K562 (cell line): ENCODE measurements at regions of chr2 and their contacts with region 1.

Region 1: GRCh38 chr2:168490015-168490874 is 34.2 kb downstream of the CERS6 start:
- DNase-seq: peak in 2 of 4 experiments; percentile 67 to 74
- ATAC-seq: peak; percentile 93
- H3K4me3 ChIP-seq: peak overlapping the region; percentile 17
- H3K27ac ChIP-seq: peak overlapping the region; percentile 76
- H3K4me1 ChIP-seq: peaks cover 0 to 17% of the 10 kb centered on the region in 2 experiments; a peak in 3 of 5 replicates
- H3K27me3 ChIP-seq: no peaks in the 10 kb centered on the region
- CTCF ChIP-seq: no peak
- EP300 ChIP-seq: peak; percentile 32; the same call in 1 of the 2 replicates
- POLR2A ChIP-seq: peak; percentile 48; the same call in 1 of the 2 replicates
- RAD21 ChIP-seq: no peak

Region 2: DNA sequence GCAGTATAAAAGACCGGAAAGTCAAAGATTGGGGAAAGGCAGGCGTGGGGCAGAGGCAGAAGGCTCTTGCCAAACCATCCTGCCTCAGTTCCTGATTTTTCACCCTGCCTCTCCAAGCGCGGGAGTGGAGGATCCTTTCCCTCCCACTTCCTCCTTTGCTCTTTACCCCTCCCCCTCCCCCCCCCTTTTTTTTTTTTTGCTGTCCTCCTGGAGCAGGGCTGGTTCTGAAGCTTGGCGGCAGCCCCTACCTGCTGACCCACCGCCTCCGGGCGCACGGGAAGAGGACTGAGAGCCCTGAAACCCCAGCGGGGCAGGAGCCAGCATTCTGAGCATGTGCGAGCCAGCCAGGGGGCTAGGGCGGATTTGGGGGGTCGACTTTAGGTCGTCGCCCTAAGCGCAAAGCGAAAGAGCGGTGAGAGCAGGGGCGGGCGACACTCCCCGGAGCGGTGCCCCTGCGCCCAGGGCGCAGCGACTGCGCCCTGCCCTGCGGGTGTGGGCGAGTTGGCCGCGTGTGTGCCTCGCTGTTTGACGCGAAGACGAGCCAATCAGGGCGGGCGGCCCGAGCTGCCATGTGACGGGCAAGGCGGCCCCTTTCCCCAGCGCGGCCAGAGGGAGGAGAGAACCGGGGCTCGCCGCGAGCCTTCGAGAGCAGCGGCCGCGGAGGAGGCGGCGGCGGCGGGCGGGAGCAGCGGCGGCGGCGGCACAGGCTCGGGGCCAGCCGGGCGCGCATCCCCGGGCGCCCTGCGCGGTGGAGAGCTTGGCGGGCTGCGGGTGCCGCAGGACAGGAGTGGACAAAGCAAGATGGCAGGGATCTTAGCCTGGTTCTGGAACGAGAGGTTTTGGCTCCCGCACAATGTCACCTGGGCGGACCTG is 34.4 kb before region 1 on chr2 and contains the start of gene CERS6:
- CTCF ChIA-PET with region 1: no interaction called
- POLR2A ChIA-PET with region 1: interaction called, 4 read pairs
- in situ Hi-C with region 1: no loop called
- intact Hi-C with region 1: loop called (anchors 2 kb)
- DNase-seq: peak; percentile 89 to 91 (median 90)
- ATAC-seq: peak; percentile 90
- H3K4me3 ChIP-seq: peak within 1 kb of the TSS; percentile 73
- H3K27ac ChIP-seq: peak within 1 kb of the TSS; percentile 84
- H3K4me1 ChIP-seq: peaks cover 10 to 19% of the 10 kb centered on the region in 2 experiments; a peak in 3 of 5 replicates
- H3K27me3 ChIP-seq: no peaks in the 10 kb centered on the region
- CTCF ChIP-seq: no peak
- EP300 ChIP-seq: no peak; the same call in 1 of the 2 replicates
- POLR2A ChIP-seq: peak; percentile 75
- RAD21 ChIP-seq: no peak
- polyA plus RNA-seq, gene CERS6: 1.6 to 2.3 TPM

Region 3: DNA sequence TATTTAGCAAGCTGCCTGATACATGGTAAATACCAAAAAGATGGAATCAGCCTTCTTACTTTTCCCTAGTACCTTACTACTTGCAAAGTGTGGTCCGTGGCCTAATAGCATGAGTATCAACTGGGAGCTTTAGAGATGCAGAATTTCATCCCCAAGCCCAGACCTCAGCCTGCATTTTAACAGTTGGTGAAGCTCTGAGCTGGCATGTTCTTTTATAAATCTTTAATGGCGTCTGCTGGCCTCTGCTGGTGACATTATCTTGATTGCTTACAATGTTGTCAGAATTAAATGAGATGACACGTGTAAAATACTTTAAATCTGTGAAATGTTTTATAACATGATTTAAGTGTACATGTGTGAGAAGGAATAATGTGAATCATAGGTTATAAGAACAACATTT is 197.1 kb after region 1 on chr2:
- CTCF ChIA-PET with region 1: no interaction called
- POLR2A ChIA-PET with region 1: no interaction called
- in situ Hi-C with region 1: no loop called
- intact Hi-C with region 1: loop called (anchors 5 kb)
- DNase-seq: no peak
- ATAC-seq: no peak
- H3K4me3 ChIP-seq: no peak overlapping the region
- H3K27ac ChIP-seq: no peak overlapping the region
- H3K4me1 ChIP-seq: peaks cover 3 to 17% of the 10 kb centered on the region in 2 experiments; a peak in 4 of 5 replicates
- H3K27me3 ChIP-seq: no peaks in the 10 kb centered on the region
- CTCF ChIP-seq: peak in 1 of 3 experiments; percentile 41; a peak in 2 of 6 replicates
- EP300 ChIP-seq: no peak
- POLR2A ChIP-seq: no peak
- RAD21 ChIP-seq: peak; percentile 38 to 48; a peak in 3 of 4 replicates